K562 (cell line): ENCODE measurements at regions of chr11 and their contacts with region 1.

Region 1: GRCh38 chr11:124194698-124195410 is 11.7 kb downstream of the OR10D3 start:
- DNase-seq: peak; percentile 48 to 86 (median 62)
- ATAC-seq: peak; percentile 96
- H3K4me3 ChIP-seq: no peak overlapping the region
- H3K27ac ChIP-seq: no peak overlapping the region
- H3K4me1 ChIP-seq: peaks cover 0 to 18% of the 10 kb centered on the region in 2 experiments; a peak in 3 of 5 replicates
- H3K27me3 ChIP-seq: no peaks in the 10 kb centered on the region
- CTCF ChIP-seq: peak; percentile 77 to 85 (median 82)
- EP300 ChIP-seq: no peak
- POLR2A ChIP-seq: no peak
- RAD21 ChIP-seq: peak; percentile 45 to 82; a peak in 3 of 4 replicates

Region 2: GRCh38 chr11:123741159-123742028 is 453.5 kb before region 1 on chr11 and contains the start of gene ZNF202:
- CTCF ChIA-PET with region 1: no interaction called
- POLR2A ChIA-PET with region 1: no interaction called
- in situ Hi-C with region 1: no loop called
- intact Hi-C with region 1: loop called (anchors 10 kb)
- DNase-seq: peak; percentile 85 to 95 (median 86)
- ATAC-seq: peak; percentile 92
- H3K4me3 ChIP-seq: peak within 1 kb of the TSS; percentile 92
- H3K27ac ChIP-seq: peak within 1 kb of the TSS; percentile 87
- H3K4me1 ChIP-seq: peaks cover 11 to 20% of the 10 kb centered on the region in 2 experiments; a peak in 4 of 5 replicates
- H3K27me3 ChIP-seq: no peaks in the 10 kb centered on the region
- CTCF ChIP-seq: no peak; a peak in 1 of 6 replicates
- EP300 ChIP-seq: 0 out of 2 replicates have a peak, but pooled peaks have one; percentile 5
- POLR2A ChIP-seq: peak; percentile 86
- RAD21 ChIP-seq: no peak
- polyA plus RNA-seq, gene ZNF202: 2.3 to 3.5 TPM

Region 3: DNA sequence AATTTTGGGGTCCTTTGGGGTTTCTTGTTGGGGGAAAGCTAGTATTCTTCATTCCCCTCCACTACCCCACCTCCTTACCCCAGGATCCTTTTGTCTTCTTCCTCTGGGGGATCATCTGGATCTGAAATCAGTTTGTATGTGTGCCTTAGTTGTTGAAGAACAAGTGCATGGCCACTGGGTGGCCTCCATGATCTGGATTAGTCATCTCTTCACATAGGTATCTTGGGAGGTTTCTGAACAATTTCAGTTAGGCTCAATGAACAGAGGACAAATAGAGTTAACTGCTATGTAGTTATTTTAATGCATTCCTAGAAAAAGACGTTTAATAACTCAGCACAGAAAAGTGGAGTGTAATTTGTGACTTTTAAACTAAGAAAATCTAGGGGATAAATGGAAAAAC is 86.7 kb before region 1 on chr11:
- CTCF ChIA-PET with region 1: interaction called, 4 read pairs
- POLR2A ChIA-PET with region 1: no interaction called
- in situ Hi-C with region 1: no loop called
- intact Hi-C with region 1: loop called (anchors 1 kb)
- DNase-seq: peak; percentile 29 to 76 (median 46)
- ATAC-seq: peak; percentile 93
- H3K4me3 ChIP-seq: no peak overlapping the region
- H3K27ac ChIP-seq: no peak overlapping the region
- H3K4me1 ChIP-seq: no peaks in the 10 kb centered on the region; a peak in 1 of 5 replicates
- H3K27me3 ChIP-seq: no peaks in the 10 kb centered on the region
- CTCF ChIP-seq: peak; percentile 55 to 65 (median 62)
- EP300 ChIP-seq: 0 out of 2 replicates have a peak, but pooled peaks have one; percentile 15
- POLR2A ChIP-seq: no peak
- RAD21 ChIP-seq: peak; percentile 74 to 90

Region 4: DNA sequence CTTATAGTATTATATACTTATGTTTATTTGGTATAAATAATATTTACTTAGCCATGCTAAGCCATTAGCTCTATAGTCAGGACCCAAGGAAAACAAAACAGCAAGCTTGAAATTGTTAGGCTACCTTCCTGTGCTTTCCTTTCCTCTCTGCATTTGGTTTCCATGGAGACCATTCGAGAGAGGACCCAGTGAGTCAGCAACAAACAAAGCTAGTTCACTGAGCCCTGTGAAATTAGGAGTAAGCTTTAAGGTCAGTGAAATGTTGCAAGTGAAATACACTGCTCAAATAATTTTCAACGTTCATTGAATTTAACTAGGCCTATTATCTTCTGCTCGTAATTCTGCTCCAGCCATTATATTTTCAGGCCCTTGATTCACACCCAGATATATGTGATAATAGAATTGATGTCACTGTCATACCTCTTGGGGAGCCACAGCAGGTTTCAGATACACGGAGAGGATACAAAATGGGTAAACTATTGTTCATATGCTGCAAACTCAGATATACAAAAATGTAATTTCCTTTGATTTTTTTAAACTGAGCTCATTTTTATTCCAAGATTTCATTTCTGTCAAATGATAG is 20.8 kb before region 1 on chr11:
- CTCF ChIA-PET with region 1: interaction called, 3 read pairs
- POLR2A ChIA-PET with region 1: interaction called, 11 read pairs
- in situ Hi-C with region 1: no loop called
- intact Hi-C with region 1: loop called (anchors 2 kb)
- DNase-seq: peak; percentile 33 to 85 (median 47)
- ATAC-seq: peak; percentile 54
- H3K4me3 ChIP-seq: no peak overlapping the region
- H3K27ac ChIP-seq: no peak overlapping the region
- H3K4me1 ChIP-seq: peaks cover 5 to 17% of the 10 kb centered on the region in 2 experiments; a peak in 4 of 5 replicates
- H3K27me3 ChIP-seq: no peaks in the 10 kb centered on the region
- CTCF ChIP-seq: no peak
- EP300 ChIP-seq: no peak
- POLR2A ChIP-seq: no peak
- RAD21 ChIP-seq: no peak

Region 5: DNA sequence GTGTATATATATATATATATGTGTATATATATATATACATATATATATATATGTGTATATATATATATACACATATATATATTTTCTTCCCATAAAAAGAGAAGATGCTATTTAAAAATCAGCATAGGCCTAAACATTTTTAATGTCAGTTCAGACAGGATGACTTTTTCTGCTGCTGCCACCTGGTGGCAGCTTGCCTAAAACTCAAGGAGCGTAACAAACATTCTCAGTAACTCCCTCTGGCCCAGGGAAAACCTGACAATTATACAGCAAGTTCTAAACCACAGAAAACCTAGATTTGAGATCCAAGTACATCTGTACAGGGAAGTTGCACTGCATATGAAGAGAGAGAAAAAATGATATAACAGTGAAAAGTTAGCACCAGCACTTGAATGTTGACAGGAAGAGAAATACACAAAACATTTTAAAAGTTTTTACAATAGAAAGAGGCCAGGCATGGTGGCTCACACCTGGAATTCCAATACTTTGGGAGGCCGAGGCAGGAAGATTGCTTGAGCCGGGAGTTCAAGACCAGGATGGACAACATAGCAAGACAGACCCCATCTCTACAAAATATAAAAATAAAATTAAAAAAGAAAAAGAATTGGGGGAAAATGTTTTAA is 391.5 kb after region 1 on chr11:
- CTCF ChIA-PET with region 1: no interaction called
- POLR2A ChIA-PET with region 1: no interaction called
- in situ Hi-C with region 1: no loop called
- intact Hi-C with region 1: loop called (anchors 10 kb)
- DNase-seq: peak; percentile 25 to 75 (median 41)
- ATAC-seq: peak; percentile 84
- H3K4me3 ChIP-seq: no peak overlapping the region
- H3K27ac ChIP-seq: no peak overlapping the region
- H3K4me1 ChIP-seq: peaks cover 0 to 5% of the 10 kb centered on the region in 2 experiments; a peak in 2 of 5 replicates
- H3K27me3 ChIP-seq: no peaks in the 10 kb centered on the region
- CTCF ChIP-seq: peak; percentile 66 to 71 (median 67)
- EP300 ChIP-seq: no peak
- POLR2A ChIP-seq: no peak
- RAD21 ChIP-seq: peak; percentile 68 to 73